CD4-positive, alpha-beta memory T cell (primary cell): ENCODE measurements at regions of chr2 and their contacts with region 1.

Region 1: GRCh38 chr2:127479219-127479825 is 47.0 kb downstream of the IWS1 start:
- DNase-seq: peak in 4 of 5 donors; percentile 24 to 48 (median 30)
- H3K4me3 ChIP-seq: no peak overlapping the region
- H3K4me3 Mint-ChIP-seq: no peak overlapping the region
- H3K27ac ChIP-seq: no peak overlapping the region
- H3K27ac Mint-ChIP-seq: no peak overlapping the region
- H3K4me1 ChIP-seq: no peaks in the 10 kb centered on the region
- H3K4me1 Mint-ChIP-seq: peaks cover 0 to 1% (median 0%) of the 10 kb centered on the region in 4 donors
- H3K27me3 ChIP-seq: no peaks in the 10 kb centered on the region
- H3K27me3 Mint-ChIP-seq: no peaks in the 10 kb centered on the region

Region 2: DNA sequence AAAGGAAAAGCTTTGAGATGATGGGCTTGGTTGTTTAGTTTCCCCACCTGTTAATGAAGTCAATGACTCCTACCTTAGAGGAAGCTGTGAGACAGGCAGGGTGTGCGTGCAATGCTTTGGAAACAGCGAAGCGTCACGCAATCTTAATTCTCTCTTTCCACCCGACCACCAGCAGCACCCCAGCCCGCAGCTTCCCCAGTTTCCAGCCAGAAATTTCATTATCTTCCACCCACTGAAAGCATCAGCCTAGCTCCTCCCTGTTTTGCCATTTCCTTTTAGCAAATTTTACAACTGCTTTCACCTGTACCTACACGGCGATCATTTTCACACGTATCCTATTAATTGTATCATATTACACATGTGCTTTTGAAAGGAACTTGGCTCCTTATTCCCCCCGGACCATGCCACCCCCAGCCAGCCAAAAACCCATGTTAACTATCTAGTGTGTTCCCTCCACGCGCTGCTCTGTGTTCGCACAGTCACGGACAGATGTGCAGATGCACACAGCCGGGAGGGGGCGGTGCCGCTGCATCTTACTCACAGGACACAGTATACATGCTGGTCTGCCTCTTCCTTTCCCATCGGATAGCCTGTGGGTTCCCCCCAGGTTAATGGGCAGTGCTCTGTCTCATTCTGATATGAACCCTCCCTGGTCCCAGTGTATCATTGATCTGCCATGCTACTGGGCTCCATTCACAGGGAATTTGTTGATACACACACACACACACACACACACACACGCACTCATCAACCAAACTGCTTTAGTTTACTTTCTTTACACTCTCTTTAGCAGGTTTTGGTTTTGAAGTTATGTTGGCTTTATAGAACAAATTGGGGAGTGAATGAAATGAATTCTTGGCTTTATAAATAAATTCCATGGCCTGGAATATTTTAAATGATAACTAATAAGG is 281.6 kb before region 1 on chr2:
- CTCF ChIA-PET with region 1: interaction called, 22 read pairs
- POLR2A ChIA-PET with region 1: no interaction called
- intact Hi-C with region 1: loop called (anchors 1 kb)
- DNase-seq: peak in 4 of 5 donors; percentile 24 to 41 (median 34)
- H3K4me3 ChIP-seq: no peak overlapping the region
- H3K4me3 Mint-ChIP-seq: peak overlapping the region; percentile 80 to 94 (median 88)
- H3K27ac ChIP-seq: no peak overlapping the region
- H3K27ac Mint-ChIP-seq: peak overlapping the region in 3 of 7 donors; percentile 8 to 67 (median 48)
- H3K4me1 ChIP-seq: no peaks in the 10 kb centered on the region
- H3K4me1 Mint-ChIP-seq: peaks cover 0 to 7% (median 5%) of the 10 kb centered on the region in 4 donors
- H3K27me3 ChIP-seq: no peaks in the 10 kb centered on the region
- H3K27me3 Mint-ChIP-seq: no peaks in the 10 kb centered on the region

Region 3: GRCh38 chr2:127324635-127325034 is 154.7 kb before region 1 on chr2:
- CTCF ChIA-PET with region 1: interaction called, 14 read pairs
- POLR2A ChIA-PET with region 1: no interaction called
- intact Hi-C with region 1: loop called (anchors 1 kb)
- DNase-seq: peak in 1 of 5 donors; percentile 6
- H3K4me3 ChIP-seq: no peak overlapping the region
- H3K4me3 Mint-ChIP-seq: no peak overlapping the region
- H3K27ac ChIP-seq: no peak overlapping the region
- H3K27ac Mint-ChIP-seq: no peak overlapping the region
- H3K4me1 ChIP-seq: no peaks in the 10 kb centered on the region
- H3K4me1 Mint-ChIP-seq: peaks cover 0 to 3% (median under 1%) of the 10 kb centered on the region in 4 donors
- H3K27me3 ChIP-seq: no peaks in the 10 kb centered on the region
- H3K27me3 Mint-ChIP-seq: no peaks in the 10 kb centered on the region

Region 4: GRCh38 chr2:127415593-127416505 is 63.5 kb before region 1 on chr2:
- CTCF ChIA-PET with region 1: interaction called, 15 read pairs
- POLR2A ChIA-PET with region 1: no interaction called
- intact Hi-C with region 1: loop called (anchors 5 kb)
- DNase-seq: peak; percentile 80 to 94 (median 82)
- H3K4me3 ChIP-seq: peak overlapping the region; percentile 55 to 88
- H3K4me3 Mint-ChIP-seq: peak overlapping the region; percentile 84 to 93 (median 86)
- H3K27ac ChIP-seq: peak overlapping the region; percentile 45
- H3K27ac Mint-ChIP-seq: peak overlapping the region; percentile 73 to 92 (median 79)
- H3K4me1 ChIP-seq: peaks cover 26% of the 10 kb centered on the region
- H3K4me1 Mint-ChIP-seq: peaks cover 14 to 37% (median 25%) of the 10 kb centered on the region in 4 donors
- H3K27me3 ChIP-seq: no peaks in the 10 kb centered on the region
- H3K27me3 Mint-ChIP-seq: peaks cover 1 to 4% of the 10 kb centered on the region in 2 donors